ENCODE measurements at regions of chr1 and their contacts with region 1.

Region 1: GRCh38 chr1:27725374-27726173 is at the start of gene FAM76A:
- DNase-seq: peak; percentile 100
- ATAC-seq: peak; percentile 96
- H3K4me3 Mint-ChIP-seq: peak within 1 kb of the TSS; percentile 84
- H3K27ac Mint-ChIP-seq: peak within 1 kb of the TSS; percentile 90
- H3K4me1 Mint-ChIP-seq: peaks cover 8% of the 10 kb centered on the region
- H3K27me3 Mint-ChIP-seq: peaks cover 11% of the 10 kb centered on the region
- CTCF ChIP-seq: no peak
- total RNA-seq, gene FAM76A: 12.5 to 14.5 TPM (median 12.8 TPM) in 3 replicates

Region 2: GRCh38 chr1:27772933-27773825 is 47.6 kb after region 1 on chr1 and contains the start of gene STX12:
- CTCF ChIA-PET with region 1: interaction called, 33 read pairs
- POLR2A ChIA-PET with region 1: interaction called, 20 read pairs
- DNase-seq: peak; percentile 99
- ATAC-seq: peak; percentile 98
- H3K4me3 Mint-ChIP-seq: peak within 1 kb of the TSS; percentile 79
- H3K27ac Mint-ChIP-seq: peak within 1 kb of the TSS; percentile 92
- H3K4me1 Mint-ChIP-seq: peaks cover 12% of the 10 kb centered on the region
- H3K27me3 Mint-ChIP-seq: no peaks in the 10 kb centered on the region; the same call in 1 of the 2 replicates
- CTCF ChIP-seq: no peak
- total RNA-seq, gene STX12: 10.1 to 10.8 TPM (median 10.3 TPM) in 3 replicates

Measured in WTC11 (cell line).